ENCODE measurements at regions of chr3 and their contacts with region 1.

Region 1: DNA sequence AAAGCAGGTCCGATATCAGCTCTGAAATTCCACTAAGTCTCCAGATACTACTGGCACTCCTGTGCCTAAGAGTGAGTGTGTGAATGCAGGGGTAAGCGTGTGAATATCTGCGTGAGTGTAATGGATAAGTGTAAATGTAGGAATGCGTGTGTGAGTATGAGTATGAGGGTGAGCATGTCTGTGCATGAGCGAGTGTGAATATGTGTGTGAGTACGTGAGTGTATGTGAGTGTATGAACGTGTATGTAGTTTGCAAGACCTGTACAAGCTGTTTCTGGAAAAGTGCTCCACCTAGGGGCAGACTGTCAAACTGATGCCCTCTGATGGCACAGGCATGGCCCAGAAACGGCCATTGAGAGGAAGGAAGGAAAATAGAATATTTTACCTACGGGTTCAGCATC is 24.4 kb upstream of the FRMD4B start:
- DNase-seq: peak; percentile 65
- ATAC-seq: peak; percentile 92
- H3K4me3 Mint-ChIP-seq: no peak overlapping the region
- H3K27ac Mint-ChIP-seq: no peak overlapping the region
- H3K4me1 Mint-ChIP-seq: peaks cover 23% of the 10 kb centered on the region
- H3K27me3 Mint-ChIP-seq: no peaks in the 10 kb centered on the region
- CTCF ChIP-seq: peak; percentile 61

Region 2: DNA sequence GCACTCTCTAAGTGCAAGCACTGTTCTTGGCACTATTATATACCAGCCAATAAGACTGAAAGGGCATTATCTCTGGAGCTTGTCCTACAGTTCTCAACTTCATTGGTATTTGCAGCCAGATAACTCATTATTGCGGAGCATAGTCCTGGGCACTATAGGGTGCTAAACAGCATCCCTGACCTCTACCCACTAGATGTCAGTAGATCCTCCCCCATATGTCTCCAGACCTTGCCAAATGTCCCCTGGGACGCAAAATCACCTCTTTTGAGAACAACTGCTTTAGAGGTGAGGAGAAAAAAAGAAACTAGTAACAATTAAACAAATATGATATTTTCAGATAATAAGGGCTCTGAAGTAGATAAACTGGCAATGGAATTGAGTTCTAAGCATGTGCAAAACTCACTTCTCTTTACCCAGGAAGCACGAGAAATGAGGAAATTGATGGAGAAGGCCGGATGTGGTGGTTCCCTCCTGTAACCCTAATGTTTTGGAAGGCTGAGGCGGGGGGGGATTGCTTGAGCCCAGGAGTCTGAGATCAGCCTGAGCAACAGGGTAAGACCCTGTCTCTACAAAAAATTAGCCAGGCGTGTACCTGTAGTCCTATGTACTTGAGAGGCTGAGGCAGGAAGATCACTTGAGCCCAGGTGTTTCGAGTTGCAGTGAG is 85.8 kb before region 1 on chr3:
- CTCF ChIA-PET with region 1: interaction called, 15 read pairs
- POLR2A ChIA-PET with region 1: no interaction called
- DNase-seq: no peak
- ATAC-seq: peak; percentile 96
- H3K4me3 Mint-ChIP-seq: no peak overlapping the region
- H3K27ac Mint-ChIP-seq: no peak overlapping the region
- H3K4me1 Mint-ChIP-seq: peaks cover 18% of the 10 kb centered on the region
- H3K27me3 Mint-ChIP-seq: no peaks in the 10 kb centered on the region
- CTCF ChIP-seq: peak; percentile 35; the same call in 1 of the 2 replicates

Region 3: DNA sequence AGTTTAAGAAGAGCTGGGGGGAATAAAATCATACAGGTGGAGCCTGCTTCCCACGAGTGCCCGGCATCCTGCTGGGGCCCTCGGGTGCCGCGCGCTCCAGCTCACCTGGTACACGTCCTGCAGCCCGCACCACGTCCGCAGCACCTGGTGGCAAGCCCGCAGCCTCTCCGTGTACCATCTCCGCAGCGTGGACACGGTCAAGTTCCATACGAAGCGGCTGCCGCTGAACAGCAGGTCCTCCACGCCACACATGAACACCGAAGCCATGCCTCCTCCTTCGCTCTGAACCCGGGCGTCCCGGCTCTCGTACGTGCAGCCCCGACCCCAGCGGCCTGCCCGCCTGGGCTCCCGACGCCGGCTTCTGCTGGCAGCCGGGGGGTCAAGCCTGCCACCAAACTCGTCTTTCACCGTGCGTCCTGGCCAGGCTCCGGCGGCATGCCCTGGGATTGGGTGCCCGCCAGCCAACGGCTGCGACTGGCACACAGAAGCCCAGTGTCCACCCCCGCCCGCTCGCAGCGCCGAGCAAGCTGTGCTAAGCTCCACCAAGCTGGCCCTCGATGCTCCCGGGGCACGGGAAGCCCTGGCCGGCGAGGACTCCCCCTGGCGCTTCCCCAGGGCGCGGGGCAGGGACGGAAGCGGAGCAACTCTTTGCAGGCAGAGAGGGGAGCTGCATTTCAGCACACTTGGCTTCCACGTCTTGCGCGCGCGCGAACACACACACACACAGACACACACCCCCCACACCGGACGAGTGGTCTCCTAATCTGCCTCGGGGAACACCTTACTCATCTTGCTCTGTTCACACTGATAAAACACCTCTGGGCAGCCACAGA is 24.3 kb before region 1 on chr3 and contains the start of gene FRMD4B:
- CTCF ChIA-PET with region 1: interaction called, 19 read pairs
- POLR2A ChIA-PET with region 1: no interaction called
- DNase-seq: peak; percentile 56
- ATAC-seq: peak; percentile 73
- H3K4me3 Mint-ChIP-seq: peak within 1 kb of the TSS; percentile 63
- H3K27ac Mint-ChIP-seq: no peak within 1 kb of the TSS
- H3K4me1 Mint-ChIP-seq: peaks cover 31% of the 10 kb centered on the region
- H3K27me3 Mint-ChIP-seq: peaks cover 32% of the 10 kb centered on the region
- CTCF ChIP-seq: no peak
- total RNA-seq, gene FRMD4B: 4.0 to 6.7 TPM (median 5.9 TPM) in 3 replicates

Region 4: DNA sequence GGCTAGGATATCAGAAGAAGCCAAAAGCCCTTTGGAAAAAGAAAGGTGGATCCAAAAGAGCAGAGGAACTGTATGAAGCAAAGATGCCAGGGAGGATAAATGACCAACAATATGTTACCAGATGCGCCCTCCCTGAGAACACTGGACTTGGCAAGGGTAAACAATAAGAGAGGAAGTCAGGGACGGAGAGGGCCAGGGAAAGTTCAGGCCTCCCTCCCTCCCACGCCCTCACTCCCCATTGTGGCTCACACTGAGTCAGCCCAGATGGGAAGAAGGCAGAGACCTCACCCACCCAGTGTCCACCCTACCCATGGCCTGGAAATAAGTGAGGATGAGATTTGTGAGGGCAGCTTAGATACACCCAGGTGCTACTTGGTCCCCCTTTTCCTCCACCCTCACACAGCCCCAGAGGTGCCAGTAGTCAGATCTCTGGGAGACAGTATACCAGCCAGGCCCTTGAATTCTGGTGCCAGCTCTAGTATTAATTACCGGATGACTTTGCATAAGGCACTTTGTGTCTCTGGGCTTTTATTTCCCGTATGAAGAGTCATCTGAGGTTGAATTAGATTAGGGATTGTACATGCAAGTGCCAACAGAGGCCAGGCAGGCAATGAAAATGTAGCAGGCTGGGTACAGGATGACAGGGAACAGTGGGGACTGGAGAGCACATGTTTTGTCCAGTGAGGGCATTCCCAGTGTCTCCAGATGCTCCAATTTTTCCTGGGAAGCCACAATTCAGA is 10.7 kb after region 1 on chr3:
- CTCF ChIA-PET with region 1: interaction called, 18 read pairs
- POLR2A ChIA-PET with region 1: no interaction called
- DNase-seq: no peak
- ATAC-seq: no peak
- H3K4me3 Mint-ChIP-seq: no peak overlapping the region
- H3K27ac Mint-ChIP-seq: peak overlapping the region; percentile 15; the same call in 1 of the 2 replicates
- H3K4me1 Mint-ChIP-seq: 0 out of 2 replicates have a peak, but pooled peaks cover 2% of the 10 kb centered on the region
- H3K27me3 Mint-ChIP-seq: no peaks in the 10 kb centered on the region
- CTCF ChIP-seq: no peak

Region 5: GRCh38 chr3:69445498-69445897 is 35.2 kb after region 1 on chr3:
- CTCF ChIA-PET with region 1: no interaction called
- POLR2A ChIA-PET with region 1: no interaction called
- DNase-seq: no peak
- ATAC-seq: no peak
- H3K4me3 Mint-ChIP-seq: no peak overlapping the region
- H3K27ac Mint-ChIP-seq: no peak overlapping the region
- H3K4me1 Mint-ChIP-seq: peaks cover 13% of the 10 kb centered on the region
- H3K27me3 Mint-ChIP-seq: no peaks in the 10 kb centered on the region
- CTCF ChIP-seq: no peak